RWPE1 (cell line): ENCODE measurements at regions of chr4 and their contacts with region 1.

Region 1: GRCh38 chr4:169010125-169011023 is at the start of gene CBR4:
- DNase-seq: peak; percentile 90
- H3K27ac ChIP-seq: peak within 1 kb of the TSS; percentile 86
- CTCF ChIP-seq: no peak; the same call in 1 of the 2 replicates

Region 2: DNA sequence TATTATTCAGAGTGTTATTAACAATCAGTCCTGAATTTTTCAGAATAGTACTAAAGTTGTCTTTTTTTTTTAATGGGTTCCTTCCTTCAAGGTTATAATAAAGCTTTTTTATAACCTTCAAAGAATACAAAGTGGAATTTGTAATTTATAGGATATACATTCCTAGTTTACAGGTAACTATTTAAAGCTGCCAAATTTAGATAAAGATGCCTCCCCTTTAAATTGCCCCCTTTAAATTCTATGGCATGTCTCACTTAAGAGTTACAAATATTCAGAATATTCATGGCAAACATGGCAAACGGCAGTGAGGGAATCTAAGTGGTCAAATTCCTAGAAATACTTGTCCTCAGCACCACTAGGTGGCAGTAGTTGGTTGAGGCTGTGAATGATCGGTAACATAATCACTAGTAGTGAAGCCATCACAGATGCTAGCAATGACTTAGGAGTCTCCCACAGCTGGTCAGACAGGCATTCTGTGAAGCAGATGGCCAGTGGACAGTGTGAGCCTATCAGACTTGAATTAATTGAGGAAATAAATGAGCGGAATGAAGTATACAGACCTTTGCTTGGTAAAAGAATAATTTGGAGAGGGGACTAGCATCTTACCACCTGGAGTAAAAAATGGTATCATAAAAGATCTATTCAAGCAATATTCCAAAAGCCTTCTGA is 86.7 kb before region 1 on chr4:
- CTCF ChIA-PET with region 1: interaction called, 17 read pairs
- POLR2A ChIA-PET with region 1: interaction called, 6 read pairs
- DNase-seq: peak; percentile 70
- H3K27ac ChIP-seq: no peak overlapping the region
- CTCF ChIP-seq: peak; percentile 85

Region 3: GRCh38 chr4:168978001-168978700 is 32.2 kb before region 1 on chr4:
- CTCF ChIA-PET with region 1: no interaction called
- POLR2A ChIA-PET with region 1: interaction called, 11 read pairs
- DNase-seq: no peak
- H3K27ac ChIP-seq: no peak overlapping the region
- CTCF ChIP-seq: no peak